Activated T-helper 1 cell treated with anti-CD3 and anti-CD28 coated beads, Interleukin-12 subunit alpha, Interleukin-12 subunit beta, Interleukin-2, Interleukin-4 antibody, amounts not matched to agents 30 ng/mL and 10 ng/mL and 1 ng/mL, durations not matched to agents 14 hours and 24 hours and 36 hours (primary cell): ENCODE measurements at regions of chr3 and their contacts with region 1.

Region 1: DNA sequence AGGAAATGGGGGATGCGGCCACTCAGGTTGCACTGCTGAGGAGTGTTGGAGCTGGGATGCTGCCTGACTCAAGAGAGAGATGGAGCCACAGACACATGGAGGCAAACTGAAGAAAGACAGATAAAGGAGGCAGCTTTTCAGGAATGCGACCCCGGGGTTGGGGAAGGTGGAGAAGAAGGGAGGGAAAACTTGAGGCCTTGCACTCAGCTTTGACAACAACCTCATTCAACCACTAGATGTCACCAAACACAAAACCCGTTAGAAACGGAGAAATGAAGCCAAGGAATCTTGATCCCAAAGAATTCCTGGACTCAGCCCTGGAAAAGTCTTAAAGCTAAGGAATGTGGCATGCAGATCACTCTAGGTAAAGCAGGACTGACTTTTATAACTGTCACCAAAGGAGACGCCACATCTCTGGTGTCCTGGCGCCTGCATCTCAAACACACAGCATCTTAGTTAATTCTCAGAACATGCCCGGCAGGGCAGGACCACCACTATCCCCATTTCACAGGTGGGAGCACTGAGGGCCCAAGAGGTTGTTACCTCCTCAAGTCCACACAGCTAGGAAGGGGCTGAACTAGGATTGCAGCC is 59.6 kb upstream of the LMCD1 start:
- DNase-seq: no peak
- H3K4me3 Mint-ChIP-seq: no peak overlapping the region
- H3K27ac Mint-ChIP-seq: no peak overlapping the region
- H3K4me1 Mint-ChIP-seq: no peaks in the 10 kb centered on the region
- H3K27me3 Mint-ChIP-seq: peaks cover 1% of the 10 kb centered on the region

Region 2: GRCh38 chr3:8607234-8608040 is 165.4 kb after region 1 on chr3:
- intact Hi-C with region 1: loop called (anchors 5 kb)
- DNase-seq: no peak
- H3K4me3 Mint-ChIP-seq: no peak overlapping the region
- H3K27ac Mint-ChIP-seq: no peak overlapping the region
- H3K4me1 Mint-ChIP-seq: no peaks in the 10 kb centered on the region
- H3K27me3 Mint-ChIP-seq: no peaks in the 10 kb centered on the region

Region 3: DNA sequence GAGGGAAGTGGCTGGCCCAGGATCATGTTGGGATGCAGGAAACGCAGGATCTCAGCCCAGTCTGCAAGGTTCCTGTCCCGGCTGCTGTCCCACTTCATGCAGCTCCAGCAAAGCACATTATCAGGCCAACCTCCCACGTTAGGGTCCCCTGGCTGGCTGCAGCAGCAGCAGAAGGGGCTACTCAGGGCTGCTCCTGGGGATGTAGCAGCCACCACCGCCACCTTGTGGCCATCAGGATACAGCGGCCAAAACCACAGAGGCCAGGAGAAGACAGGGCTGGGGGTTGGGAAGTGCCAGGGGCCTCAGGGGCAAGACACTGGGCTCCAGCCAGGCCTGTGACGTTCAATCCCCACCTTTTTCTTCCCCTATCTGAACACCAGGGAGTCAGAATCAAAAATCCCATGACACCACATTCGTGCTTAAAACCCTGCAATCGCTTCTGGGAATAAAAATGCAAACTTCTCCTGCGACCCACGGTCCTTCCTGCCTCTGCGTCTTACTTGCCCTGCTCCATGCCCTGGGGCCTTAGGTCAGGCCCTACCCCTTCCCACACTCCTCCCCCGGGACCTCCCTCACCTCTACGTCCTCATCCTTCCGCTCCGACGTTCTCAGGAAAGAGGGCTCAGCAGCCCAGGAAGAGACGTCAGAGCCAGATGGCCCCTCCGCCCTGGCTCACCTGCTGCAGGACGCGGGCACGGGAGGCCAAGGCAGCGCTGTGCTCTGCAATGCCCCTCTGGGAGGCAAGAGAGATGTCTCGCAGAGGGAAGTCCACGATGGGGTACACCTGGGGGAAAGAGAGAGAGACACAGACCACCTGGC is 181.0 kb after region 1 on chr3:
- intact Hi-C with region 1: loop called (anchors 5 kb)
- DNase-seq: no peak
- H3K4me3 Mint-ChIP-seq: peak overlapping the region; percentile 16
- H3K27ac Mint-ChIP-seq: no peak overlapping the region
- H3K4me1 Mint-ChIP-seq: no peaks in the 10 kb centered on the region
- H3K27me3 Mint-ChIP-seq: no peaks in the 10 kb centered on the region